ACHN (cell line): ENCODE measurements at regions of chr10 and their contacts with region 1.

Region 1: DNA sequence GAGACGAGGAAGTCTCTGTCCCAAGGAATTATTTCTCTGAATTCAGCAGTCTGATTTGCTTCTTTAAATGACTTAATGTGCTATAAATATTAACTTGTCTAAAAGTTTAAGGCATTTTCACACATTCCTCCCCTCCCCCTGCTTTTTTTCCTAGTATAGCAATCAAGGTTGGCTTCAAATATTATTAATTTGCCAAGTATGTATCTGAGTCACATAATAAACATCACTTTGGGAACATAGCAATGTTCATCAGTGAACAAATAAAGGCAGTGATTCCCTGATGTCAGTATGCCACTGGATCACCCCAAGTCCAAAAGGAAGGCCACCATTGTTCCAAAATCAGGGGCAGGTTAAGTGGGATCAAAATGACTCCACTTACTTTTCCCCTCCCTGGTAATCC is 40.5 kb downstream of the PDE6C start:
- DNase-seq: no peak

Region 2: GRCh38 chr10:93496322-93497041 is 156.4 kb before region 1 on chr10 and contains the start of gene CEP55:
- in situ Hi-C with region 1: no loop called
- DNase-seq: peak; percentile 96

Region 3: DNA sequence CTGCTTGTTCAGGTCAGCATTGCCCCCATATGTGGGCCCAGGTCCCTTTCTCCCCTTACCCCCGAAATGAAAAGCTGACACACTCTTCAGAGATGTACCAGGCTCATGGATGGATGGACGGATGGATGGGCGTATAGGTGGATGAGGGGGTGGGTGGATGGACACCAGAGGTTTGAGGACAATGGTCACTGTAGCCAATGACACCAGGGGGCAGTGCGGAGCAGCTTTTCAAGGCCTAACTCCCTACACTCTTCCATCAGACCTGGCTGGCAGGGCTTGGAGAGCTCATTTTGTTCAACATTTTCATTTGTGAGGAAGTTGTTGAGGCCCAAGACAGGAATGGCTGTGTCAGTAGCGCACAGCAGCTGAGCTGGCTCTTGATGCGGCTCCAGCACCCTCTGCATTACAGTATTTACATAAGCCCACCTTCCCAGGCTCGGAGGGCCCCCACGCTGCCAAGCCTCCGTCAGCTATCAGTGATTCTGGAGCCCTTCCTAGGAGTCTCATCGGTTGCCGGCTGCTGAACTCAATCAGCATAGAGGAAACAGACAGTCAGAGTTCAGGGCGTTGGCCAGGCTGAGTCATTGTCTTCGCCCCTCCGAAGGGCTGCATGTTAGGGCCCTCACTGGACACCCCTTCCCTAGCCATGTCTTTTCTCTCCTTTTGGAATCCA is 98.0 kb before region 1 on chr10:
- in situ Hi-C with region 1: loop called (anchors 25 kb)
- DNase-seq: peak; percentile 74

Region 4: GRCh38 chr10:93591065-93591808 is 61.6 kb before region 1 on chr10:
- in situ Hi-C with region 1: no loop called
- DNase-seq: no peak